Right ventricle myocardium superior (tissue), 1 donor: ENCODE measurements at regions of chr3 and their contacts with region 1.

Region 1: GRCh38 chr3:172039436-172040077 is at the start of gene FNDC3B:
- DNase-seq: peak; percentile 96
- ATAC-seq: peak; percentile 88
- total RNA-seq, gene FNDC3B: 56.1 TPM

Region 2: DNA sequence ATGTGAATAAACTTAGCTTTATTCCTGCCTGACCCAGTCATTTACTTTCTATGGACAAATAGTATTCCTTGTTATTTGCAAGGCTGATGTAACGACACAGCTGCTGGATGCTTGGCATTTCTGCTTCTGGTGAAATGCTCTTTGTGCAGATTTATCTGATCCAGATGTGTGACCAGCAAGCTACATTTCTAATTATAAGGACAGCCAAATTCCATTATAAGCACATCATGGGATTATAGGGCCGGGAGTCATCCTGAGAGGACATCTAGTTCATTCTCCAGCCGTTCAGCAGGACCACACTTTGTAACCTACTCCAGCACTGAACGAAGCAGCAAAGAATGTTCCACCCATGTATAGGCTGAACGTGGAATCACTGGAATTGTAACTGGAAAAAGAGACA is 42.7 kb after region 1 on chr3:
- intact Hi-C with region 1: no loop called
- DNase-seq: no peak
- ATAC-seq: peak; percentile 83

Region 3: GRCh38 chr3:172153335-172153861 is 113.8 kb after region 1 on chr3:
- intact Hi-C with region 1: loop called (anchors 10 kb)
- DNase-seq: peak; percentile 91
- ATAC-seq: peak; percentile 97

Region 4: DNA sequence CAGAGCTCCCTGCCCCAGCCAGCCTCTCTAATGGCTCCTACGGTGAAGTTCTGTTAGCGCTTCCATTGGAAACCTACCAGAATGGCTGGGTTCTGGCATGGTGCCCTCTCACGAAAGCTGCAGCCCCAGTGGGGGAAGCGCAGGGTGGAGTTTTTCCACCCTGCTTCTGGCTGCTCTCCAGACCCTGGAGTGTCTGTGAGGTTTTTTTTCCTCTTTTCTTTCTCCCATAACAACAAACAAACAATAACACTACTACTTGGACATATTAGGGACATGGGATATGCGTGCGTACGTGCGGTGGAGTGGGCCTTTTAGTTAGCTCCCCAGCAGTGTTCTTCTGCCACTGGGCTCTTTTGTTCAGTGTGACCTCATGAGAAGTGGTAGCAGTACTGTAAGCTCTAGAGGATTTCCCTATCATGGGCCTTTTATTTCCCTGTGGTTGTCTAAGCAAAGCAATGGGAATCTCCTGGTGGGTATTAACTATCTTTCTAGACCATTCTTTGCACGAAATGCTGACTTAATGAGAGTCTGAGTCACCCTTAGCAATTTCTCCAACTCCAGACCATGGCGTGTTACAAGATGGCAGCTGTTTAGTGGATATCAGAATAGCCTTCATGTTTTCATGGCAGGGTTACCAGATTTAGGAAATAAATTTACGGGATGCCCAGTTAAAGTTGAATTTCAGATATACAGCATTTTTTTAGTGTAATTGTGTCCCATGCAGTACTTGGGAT is 161.7 kb after region 1 on chr3:
- intact Hi-C with region 1: loop called (anchors 10 kb)
- DNase-seq: peak; percentile 91
- ATAC-seq: peak; percentile 90

Region 5: DNA sequence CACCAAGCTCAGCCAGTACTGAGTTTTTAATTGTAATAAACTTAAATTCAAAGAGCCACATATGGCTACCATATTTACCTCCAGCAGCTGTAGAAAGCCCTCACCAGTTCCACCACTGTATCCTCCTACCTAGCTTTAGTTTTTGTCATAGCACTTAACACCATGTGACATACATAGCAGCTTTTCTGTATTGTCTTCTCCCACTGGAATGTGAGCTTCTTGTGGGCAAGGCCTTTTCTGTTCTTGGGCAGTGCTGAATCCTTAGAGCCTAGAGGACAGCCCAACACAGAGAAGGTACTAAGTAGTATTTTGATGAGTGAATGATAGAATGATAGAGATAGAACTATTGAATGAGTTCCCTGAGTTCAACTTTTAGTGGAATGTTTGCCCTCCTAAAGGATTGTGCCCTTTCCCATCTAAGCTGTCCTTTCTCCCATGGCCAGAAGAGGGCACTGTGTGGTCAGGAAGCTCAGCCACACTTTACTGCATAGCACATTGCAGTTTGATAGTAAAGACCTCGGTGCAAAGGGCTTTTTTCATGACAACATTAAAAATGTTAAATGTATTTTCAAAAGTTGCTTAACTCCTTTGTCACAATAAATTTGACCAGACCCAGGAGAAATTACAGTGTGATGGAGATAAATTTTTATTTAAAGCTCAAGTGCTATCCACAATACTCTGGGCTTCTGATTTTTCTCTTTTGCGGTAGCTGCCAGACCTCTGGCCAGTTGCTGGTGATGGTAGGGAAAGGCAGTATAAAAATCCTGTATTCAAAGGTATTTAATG is 292.9 kb after region 1 on chr3:
- intact Hi-C with region 1: loop called (anchors 5 kb)
- DNase-seq: peak; percentile 63
- ATAC-seq: peak; percentile 90